Endothelial cell of umbilical vein (primary cell): ENCODE measurements at regions of chr15 and their contacts with region 1.

Region 1: DNA sequence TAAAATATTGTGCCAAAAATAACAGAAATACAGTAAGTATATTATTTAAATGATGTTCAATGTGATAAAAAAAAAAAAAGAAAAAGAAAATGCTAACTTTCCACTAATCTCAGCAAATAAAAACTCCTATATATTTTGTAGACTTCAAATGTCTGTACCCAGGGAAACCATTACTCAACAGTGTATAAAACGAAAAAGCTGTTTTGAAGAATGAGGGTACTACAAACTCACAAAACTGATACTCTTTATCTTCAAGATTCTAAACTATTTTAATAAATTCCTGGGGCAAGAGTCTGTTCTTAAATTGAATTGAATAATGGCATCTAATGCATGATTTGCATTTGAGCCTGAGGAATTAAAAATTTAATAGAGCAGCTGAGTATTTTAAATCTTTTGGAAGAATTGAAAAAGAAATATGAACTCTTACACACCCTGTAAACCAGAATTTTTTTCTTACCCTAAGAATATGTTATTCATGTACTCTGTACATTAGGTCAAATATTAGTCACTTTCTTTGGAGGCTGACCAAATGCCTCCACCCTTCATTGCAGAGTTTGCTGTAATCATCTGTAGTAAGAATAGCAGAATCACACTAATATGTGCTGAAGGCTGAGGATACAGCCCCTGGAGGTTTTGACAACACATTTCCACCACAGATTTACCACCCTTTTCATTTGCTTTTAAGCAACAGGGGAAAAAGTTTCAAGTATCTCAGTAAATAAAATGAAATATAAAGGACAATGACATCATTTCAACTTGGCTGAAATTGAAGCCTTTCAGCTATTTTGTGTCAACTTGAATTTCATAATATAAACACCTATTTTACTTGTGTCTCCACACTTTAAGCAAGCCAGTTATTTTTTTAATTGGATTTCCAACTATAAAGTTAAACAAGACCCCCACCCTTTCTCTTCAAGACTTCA is 79.7 kb downstream of the FBN1 start:
- DNase-seq: peak; percentile 98
- H3K4me3 ChIP-seq: peak overlapping the region in 1 of 3 experiments; percentile 28
- H3K27ac ChIP-seq: peak overlapping the region; percentile 84
- H3K4me1 ChIP-seq: peaks cover 33% of the 10 kb centered on the region
- H3K27me3 ChIP-seq: no peaks in the 10 kb centered on the region
- CTCF ChIP-seq: no peak
- POLR2A ChIP-seq: no peak

Region 2: DNA sequence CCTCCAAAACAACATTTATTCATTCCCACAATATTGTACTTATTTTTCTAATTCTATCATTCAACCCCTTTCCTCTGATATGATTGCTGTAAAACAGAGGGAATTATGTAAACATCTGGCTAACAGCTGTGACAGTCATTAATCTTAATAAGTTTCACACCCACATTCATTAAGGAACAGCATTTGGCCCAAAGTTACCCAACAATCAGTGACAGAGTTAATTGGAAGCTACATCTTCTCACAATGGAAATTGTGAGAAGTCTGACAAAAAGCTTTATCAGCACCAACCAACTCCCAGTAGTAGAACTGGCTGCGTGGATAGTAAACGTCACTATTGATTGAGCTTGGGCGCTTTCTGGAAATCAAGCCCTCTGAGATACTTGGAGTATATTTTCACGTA is 610.8 kb before region 1 on chr15:
- CTCF ChIA-PET with region 1: no interaction called
- POLR2A ChIA-PET with region 1: no interaction called
- dilution Hi-C with region 1: no loop called
- intact Hi-C with region 1: no loop called
- DNase-seq: no peak
- H3K4me3 ChIP-seq: no peak overlapping the region
- H3K27ac ChIP-seq: no peak overlapping the region
- H3K4me1 ChIP-seq: no peaks in the 10 kb centered on the region
- H3K27me3 ChIP-seq: peaks cover 0 to 10% of the 10 kb centered on the region in 2 experiments
- CTCF ChIP-seq: no peak
- POLR2A ChIP-seq: no peak

Region 3: GRCh38 chr15:48520376-48521155 is 45.3 kb before region 1 on chr15:
- CTCF ChIA-PET with region 1: no interaction called
- POLR2A ChIA-PET with region 1: no interaction called
- dilution Hi-C with region 1: no loop called
- intact Hi-C with region 1: loop called (anchors 1 kb)
- DNase-seq: peak; percentile 69
- H3K4me3 ChIP-seq: no peak overlapping the region
- H3K27ac ChIP-seq: no peak overlapping the region
- H3K4me1 ChIP-seq: peaks cover 5% of the 10 kb centered on the region
- H3K27me3 ChIP-seq: no peaks in the 10 kb centered on the region
- CTCF ChIP-seq: no peak
- POLR2A ChIP-seq: no peak

Region 4: DNA sequence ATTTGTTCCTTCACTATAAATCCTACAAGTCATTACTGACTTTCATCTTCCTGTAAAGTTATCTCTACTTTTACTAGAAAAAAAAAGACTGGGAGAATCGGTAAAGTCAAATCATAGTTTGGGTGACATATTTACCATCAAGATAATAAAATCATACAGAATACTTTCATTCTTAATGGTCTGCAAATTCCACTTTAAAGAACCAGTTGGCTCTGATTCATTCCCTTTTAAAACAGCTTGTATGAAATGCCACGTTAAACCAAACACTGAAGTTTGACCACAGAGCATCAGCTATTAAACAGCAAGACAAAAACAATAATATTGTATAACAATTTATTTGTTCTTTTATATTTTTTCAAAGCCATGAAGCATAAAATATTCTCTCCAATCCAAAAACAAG is 21.0 kb before region 1 on chr15:
- CTCF ChIA-PET with region 1: no interaction called
- POLR2A ChIA-PET with region 1: no interaction called
- dilution Hi-C with region 1: no loop called
- intact Hi-C with region 1: no loop called
- DNase-seq: no peak
- H3K4me3 ChIP-seq: no peak overlapping the region
- H3K27ac ChIP-seq: no peak overlapping the region
- H3K4me1 ChIP-seq: peaks cover 12% of the 10 kb centered on the region
- H3K27me3 ChIP-seq: no peaks in the 10 kb centered on the region
- CTCF ChIP-seq: no peak
- POLR2A ChIP-seq: no peak

Region 5: GRCh38 chr15:48602358-48603122 is 36.7 kb after region 1 on chr15:
- CTCF ChIA-PET with region 1: no interaction called
- POLR2A ChIA-PET with region 1: no interaction called
- dilution Hi-C with region 1: no loop called
- intact Hi-C with region 1: loop called (anchors 1 kb)
- DNase-seq: peak; percentile 91
- H3K4me3 ChIP-seq: peak overlapping the region in 1 of 3 experiments; percentile 13
- H3K27ac ChIP-seq: peak overlapping the region; percentile 71
- H3K4me1 ChIP-seq: peaks cover 26% of the 10 kb centered on the region
- H3K27me3 ChIP-seq: no peaks in the 10 kb centered on the region
- CTCF ChIP-seq: no peak
- POLR2A ChIP-seq: no peak

Region 6: GRCh38 chr15:49135893-49136292 is 570.1 kb after region 1 on chr15:
- CTCF ChIA-PET with region 1: no interaction called
- POLR2A ChIA-PET with region 1: no interaction called
- dilution Hi-C with region 1: no loop called
- intact Hi-C with region 1: loop called (anchors 5 kb)
- DNase-seq: peak; percentile 81
- H3K4me3 ChIP-seq: peak overlapping the region in 1 of 3 experiments; percentile 17
- H3K27ac ChIP-seq: peak overlapping the region; percentile 97
- H3K4me1 ChIP-seq: peaks cover 50% of the 10 kb centered on the region
- H3K27me3 ChIP-seq: no peaks in the 10 kb centered on the region
- CTCF ChIP-seq: no peak
- POLR2A ChIP-seq: no peak